ENCODE measurements at regions of chr5 and their contacts with region 1.

Region 1: DNA sequence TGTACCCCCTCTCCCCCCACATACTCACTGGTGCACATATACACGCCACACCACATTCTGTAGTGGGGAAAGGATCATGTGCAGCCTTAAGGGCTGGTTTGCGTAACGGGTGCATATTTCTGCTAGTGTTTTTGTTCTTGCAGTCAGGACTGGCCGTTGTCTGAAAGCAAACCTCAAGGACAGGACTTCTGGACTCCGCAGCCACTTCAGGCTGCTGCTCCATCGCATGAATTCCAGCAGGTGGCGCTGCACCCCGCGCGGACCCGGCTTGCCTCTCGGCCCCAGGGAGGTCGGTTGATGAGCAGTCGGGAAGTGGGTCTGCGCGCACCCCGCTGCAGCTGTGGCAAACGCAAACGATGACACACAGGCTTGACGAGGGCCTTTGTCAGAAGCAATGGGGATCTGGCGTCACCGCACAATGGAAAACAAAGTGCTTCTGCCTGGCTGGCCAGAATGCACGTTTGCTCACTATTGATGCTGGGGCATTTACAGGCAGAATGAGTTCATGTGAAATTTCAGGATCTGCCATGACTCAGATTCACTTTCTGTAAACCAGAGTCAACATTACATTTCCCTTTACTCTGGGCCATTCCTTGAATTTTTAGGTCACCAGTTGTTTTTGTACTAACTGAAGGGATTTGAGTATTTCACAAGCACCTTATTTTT is 36.3 kb upstream of the GLRX start:
- DNase-seq: peak; percentile 93
- H3K4me3 ChIP-seq: peak overlapping the region; percentile 36 to 45
- H3K27ac ChIP-seq: peak overlapping the region; percentile 71 to 95
- H3K4me1 ChIP-seq: peaks cover 2 to 35% of the 10 kb centered on the region in 2 experiments; a peak in 3 of 4 replicates
- H3K27me3 ChIP-seq: no peaks in the 10 kb centered on the region
- CTCF ChIP-seq: peak; percentile 98
- EP300 ChIP-seq: peak in 1 of 2 experiments; percentile 80; a peak in 1 of 4 replicates
- RAD21 ChIP-seq: peak; percentile 97

Region 2: DNA sequence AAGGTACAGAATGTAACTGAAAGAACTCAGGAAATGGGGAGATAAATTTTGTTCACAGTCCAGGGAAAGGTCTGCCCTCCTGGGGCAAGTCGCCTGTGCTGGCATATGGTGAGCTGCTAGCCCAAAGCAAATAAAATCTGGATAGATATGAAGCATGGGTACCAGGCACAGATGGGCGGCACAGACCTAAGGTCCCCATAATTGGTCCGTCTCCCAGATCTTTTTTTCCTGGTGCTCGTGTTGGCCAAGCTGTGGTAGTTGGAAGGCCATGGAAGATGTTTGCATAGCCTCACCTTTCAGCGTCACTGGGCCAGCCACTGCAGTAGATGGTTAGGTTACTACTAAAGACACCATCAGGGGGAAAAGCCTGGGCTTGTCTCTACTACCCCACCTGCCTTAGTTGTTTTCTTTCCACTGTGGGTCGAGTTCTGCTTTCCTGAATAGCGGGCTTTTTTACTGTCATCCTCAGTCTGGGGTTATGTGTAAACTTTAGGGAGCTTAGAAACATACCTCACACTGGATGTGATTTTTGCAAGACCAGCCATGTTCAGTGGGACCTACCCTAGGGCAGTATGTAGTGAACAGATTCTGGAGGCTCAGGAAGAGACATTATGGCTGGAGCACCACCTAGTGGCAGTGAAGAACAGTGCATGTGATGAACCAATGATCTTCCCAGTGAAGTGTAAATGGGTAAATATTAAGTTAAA is 12.1 kb before region 1 on chr5:
- CTCF ChIA-PET with region 1: interaction called, 10 read pairs
- POLR2A ChIA-PET with region 1: no interaction called
- DNase-seq: peak; percentile 83
- H3K4me3 ChIP-seq: no peak overlapping the region; a peak in 1 of 4 replicates
- H3K27ac ChIP-seq: no peak overlapping the region
- H3K4me1 ChIP-seq: peaks cover 3 to 7% of the 10 kb centered on the region in 2 experiments; a peak in 2 of 4 replicates
- H3K27me3 ChIP-seq: no peaks in the 10 kb centered on the region
- CTCF ChIP-seq: peak; percentile 97
- EP300 ChIP-seq: no peak
- RAD21 ChIP-seq: peak; percentile 98

Region 3: DNA sequence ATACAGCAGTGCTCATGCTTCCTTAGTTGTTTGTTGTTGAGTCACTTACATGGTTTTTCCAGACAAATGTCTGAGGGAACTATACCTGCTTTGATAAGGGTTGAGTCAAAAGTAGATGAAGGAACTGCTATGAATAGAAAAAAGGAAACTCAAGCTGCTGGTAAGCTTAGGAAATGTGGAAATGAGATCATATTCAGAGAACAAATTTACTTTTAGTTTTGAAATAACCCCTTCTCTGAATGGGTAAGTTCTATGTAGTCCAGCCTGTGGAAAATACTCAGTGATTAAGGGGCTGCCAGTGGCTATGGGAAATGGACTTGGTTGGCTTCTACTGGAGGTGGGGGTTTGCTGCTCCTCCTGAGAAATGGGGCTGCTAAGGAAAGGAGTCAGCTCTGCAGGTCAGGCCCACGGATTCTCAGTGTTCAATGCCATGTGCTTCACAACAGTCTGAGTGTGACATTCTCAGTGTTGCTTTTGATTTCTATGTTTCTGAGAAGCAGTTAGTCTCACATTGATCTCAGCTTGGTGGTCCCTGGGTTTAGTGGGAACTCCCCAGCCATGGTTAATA is 11.4 kb after region 1 on chr5:
- CTCF ChIA-PET with region 1: interaction called, 12 read pairs
- POLR2A ChIA-PET with region 1: no interaction called
- DNase-seq: no peak
- H3K4me3 ChIP-seq: no peak overlapping the region
- H3K27ac ChIP-seq: peak overlapping the region in 1 of 2 experiments; percentile 74; a peak in 2 of 4 replicates
- H3K4me1 ChIP-seq: peaks cover 0 to 18% of the 10 kb centered on the region in 2 experiments; a peak in 1 of 4 replicates
- H3K27me3 ChIP-seq: no peaks in the 10 kb centered on the region
- CTCF ChIP-seq: no peak
- EP300 ChIP-seq: no peak
- RAD21 ChIP-seq: no peak

Measured in SK-N-SH (cell line).